GM10248 (cell line): ENCODE measurements at regions of chr5 and their contacts with region 1.

Region 1: DNA sequence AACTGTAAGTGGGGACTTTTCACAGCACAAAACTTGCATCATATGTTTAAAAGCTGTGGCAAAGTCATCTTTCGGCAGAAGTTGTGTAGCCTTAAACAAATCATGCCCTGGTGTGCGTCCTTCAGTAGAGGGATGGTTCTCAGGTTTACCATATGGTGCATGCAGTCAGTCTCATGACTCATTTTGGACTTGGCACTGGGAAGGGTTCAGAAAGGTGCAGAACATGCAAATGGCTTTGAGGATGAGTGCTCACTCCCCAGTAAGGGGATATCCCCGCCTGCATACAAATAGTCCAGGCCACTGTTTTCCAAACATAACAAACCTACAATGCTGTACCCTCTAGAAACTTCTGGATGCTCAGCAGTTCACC is 260.3 kb downstream of the NDUFS4 start:
- DNase-seq: peak; percentile 20
- CTCF ChIP-seq: no peak

Region 2: DNA sequence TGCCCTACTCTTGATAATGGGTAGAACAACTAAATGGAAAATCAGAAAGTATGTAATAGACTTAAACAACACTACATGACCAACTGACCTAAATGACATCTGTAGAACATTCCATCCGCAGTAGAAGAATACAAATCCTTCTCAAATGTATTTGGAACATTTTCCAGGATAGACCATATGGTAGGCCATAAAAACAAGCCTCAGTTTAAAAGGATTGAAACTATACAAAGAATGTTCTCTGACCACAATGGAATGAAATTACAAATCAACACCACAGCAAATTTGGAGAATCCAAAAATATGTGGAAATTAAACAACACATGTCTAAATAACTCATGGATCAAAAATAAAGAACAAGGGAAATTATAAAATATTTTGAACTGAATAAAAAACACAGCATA is 71.2 kb before region 1 on chr5:
- CTCF ChIA-PET with region 1: no interaction called
- POLR2A ChIA-PET with region 1: no interaction called
- DNase-seq: no peak
- CTCF ChIP-seq: no peak

Region 3: GRCh38 chr5:53834500-53834899 is 13.7 kb after region 1 on chr5:
- CTCF ChIA-PET with region 1: interaction called, 11 read pairs
- POLR2A ChIA-PET with region 1: no interaction called
- DNase-seq: no peak
- CTCF ChIP-seq: no peak

Region 4: DNA sequence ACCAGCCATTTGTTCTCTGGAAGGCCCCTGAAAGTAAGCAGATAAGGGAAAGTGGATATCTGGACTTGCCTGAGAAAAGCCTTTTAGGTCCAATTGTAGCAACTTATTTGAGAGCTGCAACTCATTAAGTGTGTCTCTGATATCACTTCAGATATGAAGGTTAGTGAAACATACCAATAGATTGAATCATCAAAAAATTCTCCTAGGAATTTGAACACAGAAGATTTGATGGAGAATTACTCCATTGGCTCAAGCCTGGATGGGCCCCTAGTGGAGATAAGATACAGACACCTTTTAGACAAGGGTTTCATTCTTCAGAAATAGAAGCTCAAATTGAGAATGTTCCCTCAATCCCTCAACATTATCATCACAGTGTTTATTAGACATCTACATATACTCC is 96.3 kb after region 1 on chr5:
- CTCF ChIA-PET with region 1: no interaction called
- POLR2A ChIA-PET with region 1: no interaction called
- DNase-seq: no peak
- CTCF ChIP-seq: no peak